CD8-positive, alpha-beta T cell (primary cell): ENCODE measurements at regions of chr7 and their contacts with region 1.

Region 1: DNA sequence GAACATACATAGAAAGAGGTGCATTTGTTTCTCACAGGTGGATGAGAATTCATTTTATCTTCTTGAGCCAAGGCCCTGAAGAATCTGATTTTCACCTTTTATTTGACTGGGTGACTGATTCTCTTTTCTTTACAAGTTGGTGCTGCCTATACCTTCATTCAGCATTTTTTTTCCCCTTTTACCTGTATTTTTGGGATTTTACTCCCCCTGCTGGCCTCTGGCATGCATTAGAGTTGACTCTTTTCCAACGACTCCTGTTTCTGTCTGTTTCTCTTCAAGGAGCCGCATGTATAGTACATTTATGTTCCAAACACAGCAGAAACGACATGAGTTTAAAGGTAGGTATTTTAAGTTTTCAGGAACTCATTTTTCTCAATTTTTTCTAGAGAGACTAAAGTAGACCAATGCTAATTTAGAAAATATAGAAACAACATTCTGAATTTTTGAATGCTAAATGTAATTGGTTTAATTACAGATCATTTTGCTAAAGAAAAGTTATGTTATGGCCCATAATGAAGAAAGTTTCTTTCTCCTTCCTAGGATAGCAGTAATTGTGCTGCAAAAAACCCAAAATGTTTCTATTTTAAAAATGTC is 149.8 kb upstream of the HDAC9 start:
- DNase-seq: peak in 3 of 9 experiments; percentile 25 to 59 (median 49)
- ATAC-seq: no peak
- H3K4me3 ChIP-seq: no peak overlapping the region
- H3K4me3 Mint-ChIP-seq: no peak overlapping the region
- H3K27ac ChIP-seq: no peak overlapping the region
- H3K27ac Mint-ChIP-seq: no peak overlapping the region
- H3K4me1 ChIP-seq: no peaks in the 10 kb centered on the region
- H3K4me1 Mint-ChIP-seq: no peaks in the 10 kb centered on the region
- H3K27me3 ChIP-seq: no peaks in the 10 kb centered on the region
- H3K27me3 Mint-ChIP-seq: peaks cover 3% of the 10 kb centered on the region
- CTCF ChIP-seq: peak; percentile 82

Region 2: GRCh38 chr7:16982640-16983350 is 1362.9 kb before region 1 on chr7:
- CTCF ChIA-PET with region 1: no interaction called
- POLR2A ChIA-PET with region 1: no interaction called
- intact Hi-C with region 1: loop called (anchors 10 kb)
- DNase-seq: peak in 4 of 9 experiments; percentile 6 to 65 (median 36)
- ATAC-seq: peak; percentile 69
- H3K4me3 ChIP-seq: no peak overlapping the region
- H3K4me3 Mint-ChIP-seq: no peak overlapping the region
- H3K27ac ChIP-seq: no peak overlapping the region
- H3K27ac Mint-ChIP-seq: no peak overlapping the region
- H3K4me1 ChIP-seq: no peaks in the 10 kb centered on the region
- H3K4me1 Mint-ChIP-seq: peaks cover 2% of the 10 kb centered on the region
- H3K27me3 ChIP-seq: peaks cover 0 to 2% of the 10 kb centered on the region in 2 experiments
- H3K27me3 Mint-ChIP-seq: peaks cover 11% of the 10 kb centered on the region
- CTCF ChIP-seq: peak; percentile 99

Region 3: DNA sequence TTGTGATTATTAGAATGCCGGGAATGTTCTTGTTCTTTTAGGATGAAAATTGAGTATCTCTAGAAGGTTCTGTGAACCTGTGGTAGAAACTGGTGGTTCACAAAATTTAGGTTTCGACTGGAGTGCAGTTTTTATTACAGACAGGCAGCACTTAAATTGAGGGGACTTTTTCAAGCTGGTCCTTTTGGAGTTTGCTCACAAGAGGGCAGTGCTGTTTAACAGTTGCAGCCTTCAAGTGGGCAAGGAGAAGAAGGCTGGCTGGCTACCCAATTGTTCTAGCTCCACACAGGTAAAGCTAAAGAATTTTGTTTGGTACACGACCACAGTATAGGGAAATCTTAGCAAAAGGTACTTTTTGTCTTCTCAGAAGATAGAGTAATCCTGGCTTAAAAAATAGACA is 639.0 kb before region 1 on chr7:
- CTCF ChIA-PET with region 1: interaction called, 3 read pairs
- POLR2A ChIA-PET with region 1: no interaction called
- intact Hi-C with region 1: loop called (anchors 1 to 5 kb)
- DNase-seq: peak in 5 of 9 experiments; percentile 10 to 57 (median 22)
- ATAC-seq: peak; percentile 40
- H3K4me3 ChIP-seq: no peak overlapping the region
- H3K4me3 Mint-ChIP-seq: no peak overlapping the region
- H3K27ac ChIP-seq: no peak overlapping the region
- H3K27ac Mint-ChIP-seq: no peak overlapping the region
- H3K4me1 ChIP-seq: no peaks in the 10 kb centered on the region
- H3K4me1 Mint-ChIP-seq: no peaks in the 10 kb centered on the region
- H3K27me3 ChIP-seq: no peaks in the 10 kb centered on the region
- H3K27me3 Mint-ChIP-seq: no peaks in the 10 kb centered on the region
- CTCF ChIP-seq: peak; percentile 39

Region 4: GRCh38 chr7:18216270-18216669 is 129.5 kb before region 1 on chr7:
- CTCF ChIA-PET with region 1: interaction called, 4 read pairs
- POLR2A ChIA-PET with region 1: no interaction called
- intact Hi-C with region 1: loop called in 1 of 2 experiments (anchors 5 kb)
- DNase-seq: no peak
- ATAC-seq: no peak
- H3K4me3 ChIP-seq: no peak overlapping the region
- H3K4me3 Mint-ChIP-seq: no peak overlapping the region
- H3K27ac ChIP-seq: no peak overlapping the region
- H3K27ac Mint-ChIP-seq: no peak overlapping the region
- H3K4me1 ChIP-seq: no peaks in the 10 kb centered on the region
- H3K4me1 Mint-ChIP-seq: no peaks in the 10 kb centered on the region
- H3K27me3 ChIP-seq: no peaks in the 10 kb centered on the region
- H3K27me3 Mint-ChIP-seq: no peaks in the 10 kb centered on the region
- CTCF ChIP-seq: no peak